HepG2 (cell line): ENCODE measurements at regions of chr19 and their contacts with region 1.

Region 1: DNA sequence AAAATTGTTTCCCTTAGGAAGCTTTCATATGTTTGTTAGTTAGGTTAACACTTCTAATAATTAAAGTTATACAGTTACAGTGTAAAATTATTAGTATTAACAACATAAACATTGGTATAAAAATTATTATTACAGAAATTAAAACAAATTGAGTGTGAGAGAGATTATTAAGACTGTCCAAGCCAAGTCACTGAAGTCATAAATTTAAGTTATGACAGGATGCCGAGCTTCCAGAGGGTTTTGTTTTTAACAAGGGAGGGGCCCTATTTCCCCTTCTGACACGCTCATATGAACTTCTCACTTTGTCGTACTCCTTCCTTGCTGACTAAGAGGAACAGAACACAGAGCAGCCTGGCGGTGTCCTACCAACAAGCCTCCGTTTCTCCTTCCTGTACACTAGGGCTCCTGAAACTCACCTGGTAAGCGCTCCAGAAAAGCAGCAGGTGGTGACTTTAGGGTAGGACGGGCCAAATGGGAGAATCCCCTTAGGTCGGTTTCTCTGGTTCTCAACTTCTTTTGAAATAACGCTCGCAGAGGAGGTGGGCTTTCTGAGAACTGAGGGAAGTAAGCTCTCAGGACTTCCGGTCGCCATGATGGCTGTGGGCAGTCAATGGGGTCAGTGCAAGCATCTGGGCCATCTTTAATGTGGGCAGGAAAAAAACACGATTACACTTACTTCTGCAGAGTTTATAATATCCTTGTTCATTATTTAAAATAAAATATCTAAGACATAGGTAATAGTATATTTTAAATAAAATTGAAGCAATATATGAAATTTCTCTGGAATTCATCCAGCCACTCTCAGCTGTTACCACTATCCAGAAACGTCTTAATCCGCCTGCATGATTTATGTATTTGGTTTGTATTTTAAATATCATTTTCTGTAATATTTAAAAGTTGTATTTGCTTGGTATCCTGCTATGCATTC is at the start of gene CARD8:
- DNase-seq: peak; percentile 88
- ATAC-seq: peak; percentile 93
- H3K4me3 ChIP-seq: peak within 1 kb of the TSS; percentile 88 to 100 (median 93)
- H3K27ac ChIP-seq: peak within 1 kb of the TSS; percentile 100
- H3K4me1 ChIP-seq: peaks cover 26% of the 10 kb centered on the region
- H3K27me3 ChIP-seq: no peaks in the 10 kb centered on the region
- CTCF ChIP-seq: no peak
- EP300 ChIP-seq: no peak
- POLR2A ChIP-seq: peak; percentile 79 to 80
- RAD21 ChIP-seq: no peak
- total RNA-seq, gene CARD8: 19.2 and 22.6 TPM in 2 replicates

Region 2: GRCh38 chr19:47973529-47973928 is 282.1 kb before region 1 on chr19:
- CTCF ChIA-PET with region 1: no interaction called
- POLR2A ChIA-PET with region 1: no interaction called
- in situ Hi-C with region 1: loop called (anchors 25 kb)
- intact Hi-C with region 1: no loop called
- DNase-seq: no peak
- ATAC-seq: no peak
- H3K4me3 ChIP-seq: no peak overlapping the region
- H3K27ac ChIP-seq: no peak overlapping the region
- H3K4me1 ChIP-seq: no peaks in the 10 kb centered on the region
- H3K27me3 ChIP-seq: peaks cover 1 to 6% of the 10 kb centered on the region in 2 experiments; a peak in 3 of 5 replicates
- CTCF ChIP-seq: no peak
- EP300 ChIP-seq: no peak
- POLR2A ChIP-seq: no peak
- RAD21 ChIP-seq: no peak

Region 3: DNA sequence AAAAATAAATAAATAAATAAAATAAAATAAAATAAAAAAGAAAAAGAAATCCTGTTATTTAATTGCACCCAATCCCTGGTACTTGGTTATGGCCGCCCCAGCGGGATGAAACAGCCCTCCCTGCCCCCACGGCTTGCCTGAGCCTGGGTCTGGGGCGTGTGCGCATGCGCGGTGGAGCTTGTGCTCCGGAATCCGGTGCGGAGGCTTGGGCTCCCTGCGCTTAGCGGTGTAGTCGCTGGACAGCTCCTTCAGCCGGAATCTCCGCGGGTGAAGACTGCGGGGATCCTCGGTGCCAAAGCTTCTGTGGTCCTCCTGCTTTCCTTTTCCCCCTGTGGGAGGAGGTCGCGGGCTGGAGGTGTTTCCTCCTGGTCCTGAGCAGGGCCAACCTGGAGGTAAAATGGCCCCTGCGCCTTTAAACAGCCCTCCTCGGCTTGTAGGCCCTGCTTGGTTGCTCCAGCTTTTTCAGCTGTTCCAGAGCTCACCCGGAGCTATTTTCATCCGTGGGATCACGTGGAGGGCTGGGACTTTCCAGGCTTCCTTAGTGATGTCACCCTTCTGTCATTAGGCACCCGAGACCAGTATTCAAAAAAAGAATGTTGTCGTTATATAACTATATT is 145.2 kb before region 1 on chr19 and contains the start of gene PLA2G4C:
- CTCF ChIA-PET with region 1: no interaction called
- POLR2A ChIA-PET with region 1: interaction called, 7 read pairs
- in situ Hi-C with region 1: no loop called
- intact Hi-C with region 1: loop called (anchors 5 kb)
- DNase-seq: peak; percentile 72
- ATAC-seq: peak; percentile 73
- H3K4me3 ChIP-seq: peak within 1 kb of the TSS; percentile 71 to 87 (median 74)
- H3K27ac ChIP-seq: peak within 1 kb of the TSS; percentile 78
- H3K4me1 ChIP-seq: peaks cover 18% of the 10 kb centered on the region
- H3K27me3 ChIP-seq: no peaks in the 10 kb centered on the region; a peak in 1 of 5 replicates
- CTCF ChIP-seq: peak; percentile 7; the same call in 1 of the 2 replicates
- EP300 ChIP-seq: no peak
- POLR2A ChIP-seq: peak; percentile 76 to 78
- RAD21 ChIP-seq: no peak
- total RNA-seq, gene PLA2G4C: 0.87 and 1.7 TPM in 2 replicates

Region 4: GRCh38 chr19:48135411-48135810 is 120.2 kb before region 1 on chr19:
- CTCF ChIA-PET with region 1: no interaction called
- POLR2A ChIA-PET with region 1: no interaction called
- in situ Hi-C with region 1: no loop called
- intact Hi-C with region 1: no loop called
- DNase-seq: no peak
- ATAC-seq: peak; percentile 24; the same call in 2 of the 3 replicates
- H3K4me3 ChIP-seq: no peak overlapping the region
- H3K27ac ChIP-seq: no peak overlapping the region
- H3K4me1 ChIP-seq: no peaks in the 10 kb centered on the region
- H3K27me3 ChIP-seq: no peaks in the 10 kb centered on the region
- CTCF ChIP-seq: no peak
- EP300 ChIP-seq: no peak
- POLR2A ChIP-seq: no peak
- RAD21 ChIP-seq: no peak

Region 5: DNA sequence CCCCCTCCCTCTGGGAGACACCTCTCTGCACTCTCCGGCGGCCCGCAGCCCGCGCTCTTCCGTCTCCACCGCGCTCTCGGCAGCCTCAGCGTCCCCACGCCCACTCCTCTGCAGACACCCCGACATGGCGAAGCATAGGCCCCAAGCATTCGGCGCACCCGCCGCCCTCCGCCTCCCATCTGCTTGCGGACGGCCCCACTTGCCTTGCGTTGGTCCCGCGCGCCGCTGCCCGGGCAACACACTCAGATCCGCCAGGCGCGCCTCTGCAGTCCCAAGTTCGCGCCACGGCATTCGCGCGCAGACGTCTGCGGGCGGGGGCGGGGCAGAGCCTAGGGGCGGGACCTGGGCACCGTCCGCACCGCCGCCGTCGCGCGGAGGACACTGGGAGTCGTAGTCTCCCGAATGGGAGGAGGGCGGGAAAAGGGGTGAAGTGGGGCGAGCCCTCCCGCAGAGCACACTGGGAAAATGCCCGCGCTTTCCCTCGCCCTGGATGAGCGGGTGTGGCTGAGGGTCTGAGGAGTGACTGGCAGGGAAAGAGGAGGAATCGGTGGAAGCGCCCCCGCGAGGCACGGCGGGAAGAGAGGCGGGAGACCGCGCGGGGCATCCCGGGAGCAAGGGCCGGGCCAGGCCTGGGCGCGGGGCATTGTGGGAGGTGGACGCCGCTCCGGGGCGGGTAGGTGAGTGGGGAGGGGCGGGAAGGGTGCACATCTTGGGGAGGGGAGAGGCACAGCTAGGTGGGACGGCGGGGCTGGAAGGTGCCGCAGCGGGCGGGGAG is 85.4 kb before region 1 on chr19 and contains the starts of genes LIG1 and ZSWIM9:
- CTCF ChIA-PET with region 1: interaction called, 4 read pairs
- POLR2A ChIA-PET with region 1: interaction called, 11 read pairs
- in situ Hi-C with region 1: no loop called
- intact Hi-C with region 1: no loop called
- DNase-seq: peak; percentile 94
- ATAC-seq: peak; percentile 93
- H3K4me3 ChIP-seq: peak within 1 kb of the TSS; percentile 93 to 99 (median 96)
- H3K27ac ChIP-seq: peak within 1 kb of the TSS; percentile 99
- H3K4me1 ChIP-seq: peaks cover 26% of the 10 kb centered on the region
- H3K27me3 ChIP-seq: no peaks in the 10 kb centered on the region; a peak in 1 of 5 replicates
- CTCF ChIP-seq: peak; percentile 55
- EP300 ChIP-seq: no peak; a peak in 1 of 4 replicates
- POLR2A ChIP-seq: peak in 1 of 2 experiments; percentile 75; a peak in 3 of 4 replicates
- RAD21 ChIP-seq: no peak
- total RNA-seq, gene LIG1: 52.1 and 64.4 TPM in 2 replicates
- total RNA-seq, gene ZSWIM9: 0.39 and 1.1 TPM in 2 replicates

Region 6: GRCh38 chr19:48203732-48204628 is 51.7 kb before region 1 on chr19:
- CTCF ChIA-PET with region 1: no interaction called
- POLR2A ChIA-PET with region 1: interaction called, 17 read pairs
- in situ Hi-C with region 1: no loop called
- intact Hi-C with region 1: no loop called
- DNase-seq: peak; percentile 95
- ATAC-seq: peak; percentile 99
- H3K4me3 ChIP-seq: peak overlapping the region; percentile 71 to 79 (median 76)
- H3K27ac ChIP-seq: peak overlapping the region; percentile 69
- H3K4me1 ChIP-seq: peaks cover 18% of the 10 kb centered on the region
- H3K27me3 ChIP-seq: no peaks in the 10 kb centered on the region
- CTCF ChIP-seq: peak; percentile 37; the same call in 1 of the 2 replicates
- EP300 ChIP-seq: no peak
- POLR2A ChIP-seq: peak; percentile 64 to 76; a peak in 3 of 4 replicates
- RAD21 ChIP-seq: no peak